CD4-positive, alpha-beta T cell (primary cell): ENCODE measurements at regions of chr18 and their contacts with region 1.

Region 1: GRCh38 chr18:51385270-51385669 is 187.8 kb upstream of the MEX3C start:
- DNase-seq: no peak
- ATAC-seq: no peak
- H3K4me3 ChIP-seq: no peak overlapping the region
- H3K4me3 Mint-ChIP-seq: no peak overlapping the region
- H3K27ac ChIP-seq: no peak overlapping the region
- H3K27ac Mint-ChIP-seq: no peak overlapping the region
- H3K4me1 ChIP-seq: no peaks in the 10 kb centered on the region
- H3K4me1 Mint-ChIP-seq: no peaks in the 10 kb centered on the region
- H3K27me3 ChIP-seq: no peaks in the 10 kb centered on the region
- H3K27me3 Mint-ChIP-seq: peaks cover 5% of the 10 kb centered on the region
- CTCF ChIP-seq: no peak

Region 2: DNA sequence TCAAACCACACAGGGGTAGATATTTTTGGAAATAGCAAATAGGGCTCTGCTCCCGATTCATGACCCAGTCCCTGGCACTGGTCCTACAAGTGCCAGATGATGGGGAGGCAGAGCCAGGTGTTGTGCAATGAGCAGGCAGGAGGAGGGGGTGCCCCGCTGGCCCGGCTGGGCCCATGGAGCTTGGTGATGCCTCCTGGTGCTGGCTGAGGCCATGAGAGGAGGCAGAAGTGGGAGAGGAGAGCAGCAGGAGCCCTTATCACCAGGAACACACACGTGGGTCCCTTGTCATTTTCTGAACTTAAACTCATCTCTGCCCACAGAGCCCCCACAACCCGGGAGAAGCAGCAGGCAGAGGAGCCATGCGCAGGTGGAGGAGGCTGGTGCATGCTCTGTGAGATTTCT is 915.9 kb before region 1 on chr18:
- CTCF ChIA-PET with region 1: no interaction called
- POLR2A ChIA-PET with region 1: no interaction called
- intact Hi-C with region 1: no loop called
- DNase-seq: no peak
- ATAC-seq: no peak
- H3K4me3 ChIP-seq: no peak overlapping the region
- H3K4me3 Mint-ChIP-seq: no peak overlapping the region
- H3K27ac ChIP-seq: no peak overlapping the region
- H3K27ac Mint-ChIP-seq: no peak overlapping the region
- H3K4me1 ChIP-seq: no peaks in the 10 kb centered on the region
- H3K4me1 Mint-ChIP-seq: no peaks in the 10 kb centered on the region
- H3K27me3 ChIP-seq: peaks cover 0 to 3% of the 10 kb centered on the region in 2 experiments
- H3K27me3 Mint-ChIP-seq: peaks cover 9% of the 10 kb centered on the region
- CTCF ChIP-seq: no peak

Region 3: DNA sequence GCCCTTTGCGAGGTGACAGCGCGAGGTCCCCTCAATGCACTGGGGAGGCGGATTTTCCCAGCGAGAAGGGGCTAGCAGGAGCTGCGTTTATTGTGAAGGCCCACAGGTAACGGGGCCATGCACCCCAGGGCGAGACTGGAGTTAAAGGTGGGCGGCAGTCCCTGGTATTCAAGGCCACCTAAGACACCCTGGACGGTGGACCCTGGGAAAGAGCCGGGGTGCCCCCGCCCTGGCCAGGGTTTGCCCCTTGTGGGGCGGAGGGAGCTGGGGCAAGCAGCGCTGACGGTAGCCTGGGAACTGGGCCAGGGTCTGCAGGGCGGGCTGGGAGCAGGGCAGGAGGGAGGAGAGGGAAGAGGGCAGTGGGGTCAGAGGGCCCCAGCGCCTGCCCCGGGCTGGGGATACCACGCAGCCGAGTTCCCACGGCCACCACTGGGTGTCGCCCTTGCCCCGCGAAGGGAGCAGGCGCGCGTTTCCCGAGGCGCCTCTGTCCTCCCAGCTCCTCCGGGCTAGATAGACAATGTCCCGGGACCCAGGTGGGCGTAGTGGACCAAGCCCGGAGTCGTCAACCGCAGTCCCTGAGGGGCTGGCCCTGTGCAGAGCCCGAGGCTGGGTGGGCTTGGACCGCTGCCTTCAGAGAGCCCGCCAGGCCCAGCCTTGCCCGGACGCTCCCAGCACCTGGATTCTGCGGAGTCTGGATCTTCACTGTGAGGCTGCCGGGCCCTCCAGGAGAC is 275.0 kb before region 1 on chr18:
- CTCF ChIA-PET with region 1: no interaction called
- POLR2A ChIA-PET with region 1: no interaction called
- intact Hi-C with region 1: loop called in 1 of 2 experiments (anchors 5 kb)
- DNase-seq: peak; percentile 31 to 76 (median 58)
- ATAC-seq: peak; percentile 55
- H3K4me3 ChIP-seq: no peak overlapping the region
- H3K4me3 Mint-ChIP-seq: no peak overlapping the region
- H3K27ac ChIP-seq: no peak overlapping the region
- H3K27ac Mint-ChIP-seq: no peak overlapping the region
- H3K4me1 ChIP-seq: peaks cover 17% of the 10 kb centered on the region
- H3K4me1 Mint-ChIP-seq: peaks cover 14% of the 10 kb centered on the region
- H3K27me3 ChIP-seq: no peaks in the 10 kb centered on the region
- H3K27me3 Mint-ChIP-seq: no peaks in the 10 kb centered on the region
- CTCF ChIP-seq: peak; percentile 96